ENCODE measurements at regions of chr6 and their contacts with region 1.

Region 1: DNA sequence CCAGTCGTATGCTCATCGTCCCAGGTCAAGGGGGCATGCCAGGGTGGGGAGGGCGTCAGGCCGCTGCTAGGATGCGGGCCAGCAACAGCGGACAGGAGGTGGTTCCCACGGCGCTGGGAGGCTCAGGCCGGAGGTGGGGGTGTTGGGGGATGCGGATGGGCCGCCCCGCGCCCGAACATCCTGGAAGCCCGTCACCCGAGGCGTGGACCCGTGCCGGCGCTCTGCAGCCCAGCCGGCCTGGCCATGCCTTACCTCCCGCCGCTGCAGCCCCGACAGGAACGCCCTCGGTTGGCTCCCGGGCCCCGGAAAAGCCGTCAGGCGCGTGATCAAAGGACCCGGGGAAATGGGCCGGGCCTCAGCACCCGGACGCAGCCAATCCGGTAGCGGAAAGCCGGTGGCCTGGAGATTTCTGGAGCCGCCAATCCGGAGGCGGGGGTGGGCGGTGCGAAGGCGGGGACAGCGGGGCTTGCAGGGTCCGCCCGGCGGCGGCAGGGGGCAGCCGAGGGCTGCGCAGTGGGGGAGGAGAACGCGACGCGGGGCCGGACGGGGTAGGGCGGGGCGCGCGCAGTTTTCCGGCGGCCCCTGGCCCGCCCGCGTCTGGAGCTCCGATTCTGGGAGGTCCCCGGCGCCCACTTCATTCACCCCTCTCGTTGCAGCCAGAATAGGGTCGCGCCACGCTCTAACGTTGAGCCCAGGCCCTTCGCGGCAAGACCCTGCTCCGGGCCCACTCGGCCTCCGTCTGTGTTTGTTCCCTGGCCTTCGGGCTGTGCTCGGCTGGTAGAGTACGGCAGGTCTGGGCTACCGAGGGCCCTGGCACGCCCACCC is at the start of gene SMIM29:
- DNase-seq: peak; percentile 94 to 99 (median 97)
- H3K4me3 ChIP-seq: peak within 1 kb of the TSS; percentile 66 to 100 (median 93)
- H3K27ac ChIP-seq: peak within 1 kb of the TSS; percentile 75 to 99 (median 96)
- H3K27me3 ChIP-seq: no peaks in the 10 kb centered on the region
- CTCF ChIP-seq: peak; percentile 64 to 99 (median 94)
- total RNA-seq, gene SMIM29: 43.8 to 108 (median 67.5) TPM

Region 2: DNA sequence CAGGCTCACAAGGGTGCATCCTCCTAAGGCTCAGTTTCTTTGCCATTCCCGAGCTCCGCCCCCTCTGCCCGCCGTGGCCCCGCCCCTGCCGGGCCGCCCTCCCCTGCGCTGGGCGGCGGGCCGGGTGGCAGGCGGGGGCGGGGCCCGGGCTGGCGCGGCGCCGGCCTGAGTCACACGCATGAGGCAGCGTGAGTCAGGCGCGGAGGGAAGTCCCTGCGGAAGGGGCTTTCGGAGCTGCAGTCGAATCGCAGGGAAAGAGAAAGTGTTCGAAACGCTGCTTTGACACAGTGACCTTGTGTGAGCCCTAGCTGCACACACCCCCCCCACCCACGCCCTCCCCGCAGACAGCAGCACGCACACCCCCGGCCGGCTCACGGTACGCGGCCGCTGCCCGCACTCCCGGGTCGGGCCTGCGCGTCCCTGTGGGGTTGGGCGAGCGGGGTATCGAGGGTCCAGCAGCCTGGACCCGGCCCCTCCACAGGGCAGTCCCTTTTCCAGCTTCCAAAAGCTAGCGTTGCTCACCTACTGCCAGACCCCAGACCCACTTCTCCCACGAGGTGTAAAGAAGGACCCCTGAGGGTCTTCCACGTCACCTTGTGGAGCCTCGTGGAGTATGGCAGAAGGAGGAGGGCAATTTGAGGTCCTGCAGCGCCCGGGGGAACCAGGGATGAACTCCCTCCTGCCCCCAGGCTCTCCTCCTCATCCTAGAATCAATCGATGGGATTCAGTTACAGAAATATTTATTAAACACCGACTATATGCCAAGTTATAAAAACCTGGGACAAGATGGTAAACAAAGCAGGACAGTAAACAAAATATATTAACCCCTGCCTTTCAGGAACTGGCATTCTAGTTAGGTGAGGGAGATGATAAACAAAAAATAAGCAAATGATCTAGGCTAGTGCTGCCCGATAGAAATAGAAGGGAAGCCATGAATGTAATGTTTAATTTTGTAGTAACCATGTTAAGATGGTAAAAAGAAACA is 24.7 kb before region 1 on chr6:
- intact Hi-C with region 1: no loop called
- DNase-seq: peak; percentile 81 to 95 (median 88)
- H3K4me3 ChIP-seq: peak overlapping the region; percentile 47 to 98 (median 72)
- H3K27ac ChIP-seq: peak overlapping the region; percentile 12 to 97 (median 93)
- H3K27me3 ChIP-seq: no peaks in the 10 kb centered on the region
- CTCF ChIP-seq: peak in 6 of 56 donors; percentile 5 to 35 (median 12)

Region 3: GRCh38 chr6:34284563-34285447 is 35.9 kb after region 1 on chr6:
- intact Hi-C with region 1: loop called in 1 of 2 experiments (anchors 2 kb)
- DNase-seq: peak in 8 of 10 donors; percentile 15 to 64 (median 48)
- H3K4me3 ChIP-seq: peak overlapping the region in 17 of 59 donors; percentile 1 to 40 (median 13)
- H3K27ac ChIP-seq: peak overlapping the region; percentile 59 to 96 (median 87)
- H3K27me3 ChIP-seq: no peaks in the 10 kb centered on the region
- CTCF ChIP-seq: peak in 2 of 56 donors; percentile 6 to 7

Region 4: GRCh38 chr6:34305982-34306708 is 57.2 kb after region 1 on chr6:
- intact Hi-C with region 1: no loop called
- DNase-seq: peak in 2 of 10 donors; percentile 27 to 70
- H3K4me3 ChIP-seq: no peak overlapping the region
- H3K27ac ChIP-seq: peak overlapping the region in 32 of 59 donors; percentile 2 to 77 (median 38)
- H3K27me3 ChIP-seq: no peaks in the 10 kb centered on the region
- CTCF ChIP-seq: no peak

Region 5: DNA sequence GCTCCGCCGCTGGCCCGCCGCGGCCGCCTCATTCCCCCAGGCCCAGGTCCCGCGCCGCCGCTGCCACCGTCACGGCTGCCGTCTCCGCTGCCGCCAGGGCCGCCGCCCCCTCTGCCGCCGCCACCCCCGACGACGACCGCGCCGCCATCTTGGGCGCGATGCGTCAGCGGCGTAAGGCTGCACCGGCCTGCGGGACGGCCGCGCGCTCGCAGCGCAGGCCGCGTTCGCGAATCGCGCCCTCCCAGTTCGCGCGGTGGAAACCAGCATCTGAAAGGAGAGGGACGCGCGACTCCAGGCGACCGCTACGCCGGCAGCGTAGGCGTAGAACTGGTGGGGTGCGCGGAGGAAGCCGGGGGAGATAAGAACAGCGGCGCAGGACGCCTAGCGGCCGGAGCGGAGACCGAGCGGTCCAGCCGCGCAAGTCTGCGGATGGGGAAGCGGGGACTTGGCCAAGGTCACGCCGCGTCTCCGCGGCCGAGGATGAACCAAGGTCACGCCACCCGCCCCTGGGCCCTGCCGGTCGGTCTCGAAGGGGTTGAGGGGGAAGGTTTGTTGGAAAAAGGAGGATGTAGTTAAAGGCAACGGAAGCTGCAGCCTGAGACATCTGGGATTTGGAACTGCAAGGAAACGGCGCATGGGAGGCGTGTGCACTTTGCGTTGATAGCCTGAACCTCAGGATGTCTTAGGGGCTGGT is 143.7 kb after region 1 on chr6 and contains the start of gene NUDT3:
- intact Hi-C with region 1: loop called (anchors 1 kb)
- DNase-seq: peak; percentile 88 to 96 (median 94)
- H3K4me3 ChIP-seq: peak within 1 kb of the TSS; percentile 70 to 97 (median 88)
- H3K27ac ChIP-seq: peak within 1 kb of the TSS; percentile 84 to 99 (median 97)
- H3K27me3 ChIP-seq: no peaks in the 10 kb centered on the region
- CTCF ChIP-seq: peak; percentile 64 to 92 (median 84)
- total RNA-seq, gene NUDT3: 107 to 239 (median 169) TPM

Region 6: DNA sequence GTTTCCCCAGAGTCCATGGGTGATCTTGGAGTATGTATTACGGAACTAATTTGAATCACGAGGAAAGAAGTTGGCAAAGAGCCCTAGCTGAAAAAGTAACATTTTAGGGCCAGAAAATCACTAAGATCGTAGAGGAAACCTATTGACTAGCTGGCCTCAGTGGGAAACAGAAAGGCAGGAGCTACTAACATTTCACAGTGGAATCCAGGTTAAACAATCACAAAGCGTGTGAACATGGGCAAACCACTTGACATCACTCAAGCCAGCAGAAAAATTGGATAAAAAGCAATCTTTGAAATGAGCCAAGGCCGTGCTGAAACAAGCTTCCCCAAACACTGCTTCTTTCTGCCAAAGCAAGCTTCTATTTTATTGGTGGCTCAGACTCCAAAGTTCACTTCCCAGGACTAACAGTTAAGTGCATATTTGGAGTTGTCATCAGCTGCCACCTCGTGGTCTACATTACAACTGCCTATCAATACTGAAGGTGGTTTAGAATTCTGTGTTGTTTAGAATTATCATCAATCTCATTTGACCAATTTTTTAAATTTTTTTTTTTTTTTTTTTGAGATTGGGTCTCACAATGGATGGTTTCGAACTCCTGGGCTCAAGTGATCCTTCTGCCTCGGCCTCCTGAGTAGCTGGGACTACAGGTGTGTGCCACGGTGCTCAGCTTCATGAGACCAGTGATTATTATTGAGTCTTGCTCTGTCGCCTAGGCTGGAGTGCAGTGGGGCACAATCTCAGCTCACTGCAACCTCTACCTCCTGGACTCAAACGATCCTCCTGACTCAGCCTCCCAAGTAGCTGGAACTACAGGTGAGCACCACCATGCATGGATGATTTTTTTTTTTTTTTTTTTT is 166.3 kb after region 1 on chr6:
- intact Hi-C with region 1: loop called (anchors 1 kb)
- DNase-seq: peak in 5 of 10 donors; percentile 39 to 75 (median 51)
- H3K4me3 ChIP-seq: peak overlapping the region in 7 of 59 donors; percentile 12 to 27 (median 19)
- H3K27ac ChIP-seq: peak overlapping the region in 58 of 59 donors; percentile 4 to 94 (median 80)
- H3K27me3 ChIP-seq: no peaks in the 10 kb centered on the region
- CTCF ChIP-seq: peak; percentile 58 to 89 (median 80)

Region 7: DNA sequence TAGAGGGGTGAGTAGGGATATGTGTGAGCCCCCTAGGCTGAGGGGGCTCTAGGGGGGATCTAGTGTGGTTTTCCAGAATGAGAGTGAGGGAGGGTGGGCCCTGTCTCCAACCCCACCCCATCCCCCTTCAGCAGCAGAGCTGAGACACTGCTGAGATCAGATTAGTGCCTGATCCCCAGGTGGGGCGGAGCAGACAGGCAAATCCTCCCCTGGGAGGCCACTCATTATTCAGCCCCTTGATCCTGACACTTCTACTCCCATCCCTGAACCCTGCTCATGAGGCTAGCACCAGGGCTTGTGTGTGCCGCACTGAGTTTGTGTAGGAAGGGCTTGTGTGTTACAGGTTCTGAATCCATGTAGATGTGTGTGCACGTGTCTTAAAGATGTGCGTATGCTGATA is 264.7 kb after region 1 on chr6:
- intact Hi-C with region 1: no loop called
- DNase-seq: peak in 1 of 10 donors; percentile 17
- H3K4me3 ChIP-seq: peak overlapping the region in 1 of 59 donors; percentile 20
- H3K27ac ChIP-seq: peak overlapping the region in 42 of 59 donors; percentile 1 to 92 (median 54)
- H3K27me3 ChIP-seq: peaks cover 0 to 15% (median 0%) of the 10 kb centered on the region in 45 donors
- CTCF ChIP-seq: no peak

Region 8: DNA sequence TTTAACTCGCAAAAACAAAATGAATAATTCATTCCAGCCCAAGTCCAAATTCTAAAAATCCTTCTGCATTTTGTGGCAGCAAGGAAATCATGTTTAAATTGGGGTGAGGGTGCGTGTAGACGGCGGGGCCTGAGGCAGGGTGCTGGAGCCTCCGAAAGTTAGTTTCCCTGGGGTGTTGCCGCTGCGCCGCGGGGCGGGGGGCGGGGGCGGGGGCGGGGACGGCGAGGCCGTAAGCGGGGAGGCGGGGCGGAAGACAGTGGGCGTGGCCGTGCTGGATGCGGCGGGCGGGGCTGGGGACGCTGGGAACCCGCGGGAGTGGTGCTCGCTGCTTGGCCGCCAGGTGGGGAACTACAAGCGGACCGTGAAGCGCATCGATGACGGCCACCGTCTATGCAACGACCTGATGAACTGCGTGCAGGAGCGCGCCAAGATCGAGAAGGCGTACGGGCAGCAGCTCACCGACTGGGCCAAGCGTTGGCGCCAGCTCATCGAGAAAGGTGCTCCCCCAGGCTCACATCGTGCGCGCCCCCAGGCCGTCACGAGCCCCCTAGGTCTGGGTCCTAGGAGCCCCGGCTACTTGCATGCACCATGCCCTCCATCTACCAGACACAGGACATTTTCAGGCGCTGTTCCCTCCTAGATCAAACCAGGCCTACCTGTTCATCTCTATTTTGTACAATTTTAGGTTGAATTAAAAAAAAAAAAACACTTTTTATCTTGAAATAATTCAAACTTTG is 278.2 kb after region 1 on chr6:
- intact Hi-C with region 1: loop called in 1 of 2 experiments (anchors 5 kb)
- DNase-seq: peak; percentile 86 to 97 (median 90)
- H3K4me3 ChIP-seq: peak overlapping the region in 58 of 59 donors; percentile 8 to 62 (median 46)
- H3K27ac ChIP-seq: peak overlapping the region in 38 of 59 donors; percentile 1 to 71 (median 42)
- H3K27me3 ChIP-seq: no peaks in the 10 kb centered on the region
- CTCF ChIP-seq: peak in 54 of 56 donors; percentile 53 to 84 (median 72)

Region 9: GRCh38 chr6:34608321-34609091 is 359.6 kb after region 1 on chr6:
- intact Hi-C with region 1: loop called in 1 of 2 experiments (anchors 5 kb)
- DNase-seq: no peak
- H3K4me3 ChIP-seq: no peak overlapping the region
- H3K27ac ChIP-seq: peak overlapping the region in 34 of 59 donors; percentile 0 to 81 (median 46)
- H3K27me3 ChIP-seq: no peaks in the 10 kb centered on the region
- CTCF ChIP-seq: no peak

Measured in dorsolateral prefrontal cortex (tissue), 120 donors.